Heart right ventricle (tissue), 16 donors: ENCODE measurements at regions of chr2 and their contacts with region 1.

Region 1: GRCh38 chr2:212686285-212686895 is 147.8 kb upstream of the ERBB4 start:
- DNase-seq: peak; percentile 19 to 22
- ATAC-seq: peak in 1 of 8 donors; percentile 41
- H3K4me3 ChIP-seq: no peak overlapping the region
- H3K27ac ChIP-seq: no peak overlapping the region
- H3K4me1 ChIP-seq: no peaks in the 10 kb centered on the region
- H3K27me3 ChIP-seq: peaks cover 0 to 8% (median 0%) of the 10 kb centered on the region in 7 donors
- CTCF ChIP-seq: peak; percentile 60 to 90 (median 83)

Region 2: DNA sequence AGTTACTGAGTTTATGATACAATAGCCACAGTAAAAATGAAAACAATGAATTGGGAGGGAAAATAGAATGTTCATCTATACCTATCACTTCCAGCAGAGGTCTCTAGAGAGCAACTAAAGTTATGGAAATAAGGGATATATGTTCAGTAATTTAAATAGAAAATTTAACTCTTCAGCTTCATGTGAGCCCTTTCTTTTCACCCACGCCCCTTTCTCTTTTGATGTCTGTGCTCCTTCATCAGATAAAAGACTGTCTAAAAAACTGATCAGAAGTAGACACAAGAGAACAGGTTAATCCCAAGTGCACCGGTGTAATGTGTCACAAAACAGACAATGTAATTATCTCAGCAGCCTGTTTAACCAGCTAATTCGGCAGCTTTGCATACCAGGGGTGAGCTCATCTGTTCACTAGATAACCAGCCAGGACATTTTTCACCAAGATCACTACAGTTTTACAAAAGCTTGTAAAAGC is 90.7 kb after region 1 on chr2:
- intact Hi-C with region 1: loop called in 1 of 10 experiments (anchors 10 kb)
- DNase-seq: no peak
- ATAC-seq: no peak
- H3K4me3 ChIP-seq: no peak overlapping the region
- H3K27ac ChIP-seq: no peak overlapping the region
- H3K4me1 ChIP-seq: peaks cover 0 to 4% (median 0%) of the 10 kb centered on the region in 9 donors
- H3K27me3 ChIP-seq: no peaks in the 10 kb centered on the region
- CTCF ChIP-seq: peak; percentile 38 to 81 (median 69)

Region 3: DNA sequence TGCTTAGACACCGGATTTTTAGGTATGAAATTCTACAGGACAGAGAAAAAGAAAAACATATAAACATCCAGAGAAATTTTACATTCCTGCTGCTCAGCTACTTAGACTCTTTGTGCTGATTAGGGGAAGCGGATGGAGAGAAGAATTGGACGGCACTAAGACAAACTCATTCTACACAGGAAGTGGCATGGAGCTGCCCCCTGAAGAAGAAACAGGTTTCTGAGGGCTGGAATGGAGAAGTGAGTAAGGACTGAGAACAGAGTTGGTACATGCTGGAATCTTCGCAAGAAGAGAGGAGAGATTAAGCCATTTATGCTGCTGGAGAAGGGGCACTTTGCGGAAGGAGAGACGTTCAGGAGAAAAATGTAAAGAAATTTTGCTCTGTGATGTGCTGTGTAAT is 105.2 kb after region 1 on chr2:
- intact Hi-C with region 1: no loop called
- DNase-seq: no peak
- ATAC-seq: no peak
- H3K4me3 ChIP-seq: no peak overlapping the region
- H3K27ac ChIP-seq: no peak overlapping the region
- H3K4me1 ChIP-seq: no peaks in the 10 kb centered on the region
- H3K27me3 ChIP-seq: no peaks in the 10 kb centered on the region
- CTCF ChIP-seq: no peak

Region 4: GRCh38 chr2:212892193-212892592 is 205.8 kb after region 1 on chr2:
- intact Hi-C with region 1: loop called in 1 of 10 experiments (anchors 10 kb)
- DNase-seq: no peak
- ATAC-seq: no peak
- H3K4me3 ChIP-seq: no peak overlapping the region
- H3K27ac ChIP-seq: no peak overlapping the region
- H3K4me1 ChIP-seq: peaks cover 0 to 6% (median 0%) of the 10 kb centered on the region in 9 donors
- H3K27me3 ChIP-seq: no peaks in the 10 kb centered on the region
- CTCF ChIP-seq: peak in 7 of 9 donors; percentile 15 to 49 (median 39)

Region 5: GRCh38 chr2:212905640-212906220 is 219.3 kb after region 1 on chr2:
- intact Hi-C with region 1: loop called in 1 of 10 experiments (anchors 10 kb)
- DNase-seq: no peak
- ATAC-seq: peak in 3 of 8 donors; percentile 31 to 51 (median 42)
- H3K4me3 ChIP-seq: no peak overlapping the region
- H3K27ac ChIP-seq: no peak overlapping the region
- H3K4me1 ChIP-seq: peaks cover 0 to 6% (median 0%) of the 10 kb centered on the region in 9 donors
- H3K27me3 ChIP-seq: no peaks in the 10 kb centered on the region
- CTCF ChIP-seq: no peak

Region 6: GRCh38 chr2:213151437-213152064 is 465.2 kb after region 1 on chr2 and contains the start of gene IKZF2:
- intact Hi-C with region 1: loop called in 8 of 10 experiments (anchors 2 to 10 kb)
- DNase-seq: peak; percentile 82 to 84
- ATAC-seq: peak; percentile 85 to 98 (median 93)
- H3K4me3 ChIP-seq: peak within 1 kb of the TSS; percentile 16 to 93 (median 88)
- H3K27ac ChIP-seq: peak within 1 kb of the TSS; percentile 86 to 97 (median 92)
- H3K4me1 ChIP-seq: peaks cover 0 to 38% (median 13%) of the 10 kb centered on the region in 9 donors
- H3K27me3 ChIP-seq: peaks cover 0 to 7% (median 0%) of the 10 kb centered on the region in 7 donors
- CTCF ChIP-seq: no peak
- total RNA-seq, gene IKZF2: 2.0 to 8.1 (median 6.0) TPM

Region 7: GRCh38 chr2:213157242-213157641 is 470.9 kb after region 1 on chr2:
- intact Hi-C with region 1: loop called in 7 of 10 experiments (anchors 2 to 10 kb)
- DNase-seq: no peak
- ATAC-seq: peak in 2 of 8 donors; percentile 34 to 36
- H3K4me3 ChIP-seq: no peak overlapping the region
- H3K27ac ChIP-seq: no peak overlapping the region
- H3K4me1 ChIP-seq: peaks cover 0 to 15% (median 10%) of the 10 kb centered on the region in 9 donors
- H3K27me3 ChIP-seq: peaks cover 0 to 7% (median 0%) of the 10 kb centered on the region in 7 donors
- CTCF ChIP-seq: no peak

Region 8: GRCh38 chr2:213251618-213252017 is 565.2 kb after region 1 on chr2:
- intact Hi-C with region 1: loop called in 2 of 10 experiments (anchors 5 to 10 kb)
- DNase-seq: no peak
- ATAC-seq: peak in 3 of 8 donors; percentile 34 to 74 (median 43)
- H3K4me3 ChIP-seq: no peak overlapping the region
- H3K27ac ChIP-seq: no peak overlapping the region
- H3K4me1 ChIP-seq: no peaks in the 10 kb centered on the region
- H3K27me3 ChIP-seq: peaks cover 0 to 4% (median 0%) of the 10 kb centered on the region in 7 donors
- CTCF ChIP-seq: peak; percentile 54 to 85 (median 71)